ENCODE measurements at regions of chr17 and their contacts with region 1.

Region 1: DNA sequence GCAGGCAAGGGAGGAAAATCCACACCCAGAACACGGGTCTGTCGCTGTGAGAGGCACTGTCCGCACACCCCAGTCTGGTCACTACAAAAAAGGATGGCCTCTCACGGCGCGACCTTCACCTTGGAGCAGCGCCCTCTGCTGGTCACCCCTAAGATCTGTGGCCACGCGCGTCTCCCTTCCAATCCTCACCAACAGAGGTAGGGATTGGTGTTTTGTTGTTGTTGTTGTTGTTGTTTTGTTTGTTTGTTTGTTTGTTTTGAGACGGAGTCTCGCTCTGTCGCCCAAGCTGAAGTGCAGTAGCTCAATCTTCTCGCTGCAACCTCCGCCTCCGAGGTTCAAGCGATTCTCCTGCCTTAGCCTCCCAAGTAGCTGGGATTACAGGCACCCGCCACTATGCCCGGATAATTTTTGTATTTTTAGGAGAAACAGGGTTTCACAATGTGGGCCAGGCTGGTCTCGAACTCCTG is 15.0 kb upstream of the C17orf58 start:
- DNase-seq: peak; percentile 86
- ATAC-seq: peak; percentile 90
- H3K4me3 Mint-ChIP-seq: peak overlapping the region; percentile 64
- H3K27ac Mint-ChIP-seq: peak overlapping the region; percentile 67
- H3K4me1 Mint-ChIP-seq: peaks cover 5% of the 10 kb centered on the region
- H3K27me3 Mint-ChIP-seq: no peaks in the 10 kb centered on the region

Region 2: DNA sequence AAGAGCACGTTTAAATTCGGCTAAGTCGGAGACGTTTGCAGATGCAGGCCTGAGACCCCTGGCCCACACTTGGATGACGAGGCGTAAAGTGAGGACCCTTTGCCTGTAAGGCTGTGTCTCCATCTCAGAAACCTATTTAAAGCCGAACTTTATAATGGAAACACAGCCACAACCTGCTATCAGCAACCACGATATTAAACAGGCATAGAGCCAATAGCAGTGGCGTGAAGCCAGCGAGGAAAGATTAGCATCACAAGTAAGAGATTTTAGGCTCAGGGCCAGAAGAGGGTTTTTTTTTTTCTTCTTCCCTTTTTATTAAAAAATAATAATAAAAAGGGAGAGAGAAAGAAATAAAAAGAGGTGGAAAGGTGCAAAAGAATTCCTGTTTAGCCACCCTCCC is 404.8 kb before region 1 on chr17:
- CTCF ChIA-PET with region 1: no interaction called
- POLR2A ChIA-PET with region 1: no interaction called
- intact Hi-C with region 1: no loop called
- DNase-seq: no peak
- ATAC-seq: no peak
- H3K4me3 Mint-ChIP-seq: no peak overlapping the region
- H3K27ac Mint-ChIP-seq: no peak overlapping the region
- H3K4me1 Mint-ChIP-seq: peaks cover 17% of the 10 kb centered on the region
- H3K27me3 Mint-ChIP-seq: no peaks in the 10 kb centered on the region

Region 3: DNA sequence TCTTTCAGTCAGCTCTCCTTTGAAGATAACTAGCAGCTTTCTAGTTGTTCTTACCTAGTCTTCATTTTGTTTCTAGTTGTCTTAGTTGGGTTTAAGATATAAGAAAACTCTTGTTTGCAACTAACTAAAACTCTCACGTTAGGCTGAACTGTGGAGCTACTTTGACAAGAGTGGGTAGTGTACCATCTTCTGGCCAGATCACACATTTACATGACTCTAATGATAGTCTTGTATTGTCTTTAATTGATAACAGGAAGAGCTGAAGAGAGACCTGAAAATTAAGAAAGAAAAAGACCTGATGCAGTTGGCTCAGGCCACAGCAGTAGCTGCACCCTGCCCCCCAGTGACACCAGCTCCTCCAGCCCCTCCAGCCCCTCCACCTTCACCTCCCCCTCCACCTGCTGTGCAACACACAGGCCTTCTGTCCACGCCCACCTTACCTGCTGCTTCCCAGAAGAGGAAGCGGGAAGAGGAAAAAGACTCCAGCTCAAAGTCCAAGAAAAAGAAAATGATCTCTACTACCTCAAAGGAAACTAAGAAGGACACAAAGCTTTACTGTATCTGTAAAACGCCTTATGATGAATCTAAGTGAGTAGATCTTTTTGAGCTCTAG is 51.8 kb before region 1 on chr17:
- CTCF ChIA-PET with region 1: interaction called, 10 read pairs
- POLR2A ChIA-PET with region 1: no interaction called
- intact Hi-C with region 1: loop called in 1 of 2 experiments (anchors 5 kb)
- DNase-seq: no peak
- ATAC-seq: no peak
- H3K4me3 Mint-ChIP-seq: no peak overlapping the region
- H3K27ac Mint-ChIP-seq: peak overlapping the region; percentile 66
- H3K4me1 Mint-ChIP-seq: peaks cover 16% of the 10 kb centered on the region
- H3K27me3 Mint-ChIP-seq: no peaks in the 10 kb centered on the region